PC-3 (cell line): ENCODE measurements at regions of chr22 and their contacts with region 1.

Region 1: DNA sequence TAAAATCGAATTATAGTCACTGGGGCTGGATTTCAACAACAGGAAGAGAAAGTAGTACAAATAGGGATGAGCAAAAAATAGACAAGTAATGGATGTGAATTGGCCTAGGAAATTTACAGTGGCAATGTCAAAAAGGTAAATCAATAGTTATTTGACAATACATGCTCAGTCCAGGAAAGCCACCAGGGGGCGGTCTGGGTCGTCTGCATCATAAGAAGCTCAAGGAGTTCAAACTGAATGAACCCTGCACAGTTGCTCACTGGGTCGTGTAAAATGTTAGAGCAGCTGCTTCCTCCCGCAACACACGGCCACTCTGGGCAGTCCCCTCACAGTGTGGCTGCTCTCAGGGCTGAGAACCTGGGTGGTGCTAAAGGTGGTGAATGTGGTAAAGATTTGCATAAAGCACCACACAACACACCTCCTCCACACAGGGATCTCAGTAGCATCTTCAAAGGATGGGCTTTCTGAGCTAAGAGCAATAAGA is 85.9 kb downstream of the ZNF280B start:
- DNase-seq: peak; percentile 48
- ATAC-seq: peak; percentile 45; the same call in 1 of the 2 replicates
- H3K4me3 ChIP-seq: no peak overlapping the region
- H3K27ac ChIP-seq: no peak overlapping the region
- H3K4me1 ChIP-seq: no peaks in the 10 kb centered on the region
- H3K27me3 ChIP-seq: peaks cover 43% of the 10 kb centered on the region
- CTCF ChIP-seq: peak; percentile 77

Region 2: GRCh38 chr22:22329792-22330191 is 92.9 kb before region 1 on chr22:
- CTCF ChIA-PET with region 1: no interaction called
- POLR2A ChIA-PET with region 1: no interaction called
- intact Hi-C with region 1: no loop called
- DNase-seq: no peak
- ATAC-seq: no peak
- H3K4me3 ChIP-seq: no peak overlapping the region
- H3K27ac ChIP-seq: no peak overlapping the region
- H3K4me1 ChIP-seq: no peaks in the 10 kb centered on the region
- H3K27me3 ChIP-seq: no peaks in the 10 kb centered on the region
- CTCF ChIP-seq: no peak

Region 3: GRCh38 chr22:22450343-22450839 is 27.7 kb after region 1 on chr22:
- CTCF ChIA-PET with region 1: interaction called, 10 read pairs
- POLR2A ChIA-PET with region 1: no interaction called
- intact Hi-C with region 1: no loop called
- DNase-seq: no peak
- ATAC-seq: no peak
- H3K4me3 ChIP-seq: no peak overlapping the region
- H3K27ac ChIP-seq: no peak overlapping the region
- H3K4me1 ChIP-seq: no peaks in the 10 kb centered on the region
- H3K27me3 ChIP-seq: peaks cover 13% of the 10 kb centered on the region; the same call in 1 of the 2 replicates
- CTCF ChIP-seq: no peak